ENCODE measurements at regions of chr17 and their contacts with region 1.

Region 1: DNA sequence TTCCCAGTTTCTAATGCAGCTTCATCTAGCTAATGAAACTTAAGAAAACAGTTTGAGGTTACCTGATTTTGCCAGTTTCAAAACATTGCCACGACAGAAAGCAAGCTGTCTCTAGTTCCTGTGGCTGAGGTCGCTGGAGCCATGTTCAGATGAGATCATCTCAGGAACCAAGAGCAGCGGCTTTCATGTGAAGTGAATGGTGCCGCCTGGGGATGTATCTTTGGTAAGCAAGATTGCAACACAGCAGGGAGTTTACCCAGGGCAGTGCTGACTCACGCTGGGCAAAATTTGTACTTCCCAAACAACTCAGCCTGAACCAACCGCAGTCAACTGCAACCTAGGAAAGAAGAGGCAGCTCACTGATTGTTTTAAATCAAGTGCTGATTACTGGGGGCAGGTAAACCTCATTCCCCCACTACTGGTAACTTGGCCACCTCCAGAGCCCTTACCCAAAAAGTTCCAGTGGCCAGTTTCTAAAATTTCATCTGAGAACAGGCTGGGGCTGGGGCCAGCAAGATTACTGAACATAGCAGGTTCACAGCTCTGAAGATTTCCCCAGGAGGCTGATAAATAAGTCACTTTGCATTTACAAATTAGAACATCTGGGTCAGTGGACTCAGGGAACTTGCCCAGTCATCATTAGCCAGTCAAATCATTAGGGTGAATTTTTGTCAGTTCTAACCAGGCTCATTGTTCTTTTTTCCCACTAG is at the start of gene RFFL:
- DNase-seq: peak; percentile 98
- ATAC-seq: peak; percentile 93
- H3K4me3 ChIP-seq: peak within 1 kb of the TSS; percentile 29; the same call in 1 of the 2 replicates
- H3K27ac ChIP-seq: peak within 1 kb of the TSS; percentile 86
- H3K4me1 ChIP-seq: peaks cover 23% of the 10 kb centered on the region
- H3K27me3 ChIP-seq: no peaks in the 10 kb centered on the region
- CTCF ChIP-seq: peak; percentile 16 to 48 (median 36); a peak in 3 of 6 replicates
- EP300 ChIP-seq: peak; percentile 80 to 86
- POLR2A ChIP-seq: peak; percentile 54
- RAD21 ChIP-seq: peak; percentile 45
- polyA plus RNA-seq, gene RFFL: 4.7 to 6.7 TPM

Region 2: DNA sequence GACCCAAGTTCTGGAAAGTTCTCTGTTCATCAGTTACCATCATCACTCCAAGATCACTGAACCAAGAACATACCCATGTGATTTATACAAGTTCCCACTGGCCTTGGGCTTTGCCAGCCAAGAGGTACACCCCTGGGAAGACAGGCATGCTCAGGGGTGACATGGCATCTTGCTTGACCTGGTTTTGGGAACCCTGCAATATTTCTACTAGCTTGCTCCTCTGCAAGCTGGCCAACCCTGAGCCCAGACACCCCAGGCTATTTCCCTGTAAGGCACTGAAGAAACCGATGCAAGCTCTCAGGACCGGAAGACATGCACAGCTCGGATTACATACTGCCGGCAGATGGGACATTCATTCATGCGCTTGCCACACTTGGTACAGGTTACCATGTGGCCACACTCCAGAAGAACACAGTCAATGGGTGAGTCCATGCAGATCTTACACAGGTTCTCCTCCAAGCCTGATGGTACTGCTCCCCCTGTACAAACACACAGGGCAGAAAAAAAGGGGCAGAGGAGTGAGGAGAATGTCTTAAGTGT is 51.9 kb before region 1 on chr17:
- CTCF ChIA-PET with region 1: interaction called, 4 read pairs
- POLR2A ChIA-PET with region 1: no interaction called
- RAD21 ChIA-PET with region 1: interaction called, 3 read pairs
- SMC1A ChIA-PET with region 1: interaction called, 10 read pairs
- in situ Hi-C with region 1: no loop called
- intact Hi-C with region 1: no loop called
- DNase-seq: no peak
- ATAC-seq: no peak
- H3K4me3 ChIP-seq: no peak overlapping the region
- H3K27ac ChIP-seq: no peak overlapping the region
- H3K4me1 ChIP-seq: no peaks in the 10 kb centered on the region
- H3K27me3 ChIP-seq: no peaks in the 10 kb centered on the region
- CTCF ChIP-seq: no peak
- EP300 ChIP-seq: no peak
- POLR2A ChIP-seq: peak; percentile 31; the same call in 1 of the 2 replicates
- RAD21 ChIP-seq: no peak

Region 3: DNA sequence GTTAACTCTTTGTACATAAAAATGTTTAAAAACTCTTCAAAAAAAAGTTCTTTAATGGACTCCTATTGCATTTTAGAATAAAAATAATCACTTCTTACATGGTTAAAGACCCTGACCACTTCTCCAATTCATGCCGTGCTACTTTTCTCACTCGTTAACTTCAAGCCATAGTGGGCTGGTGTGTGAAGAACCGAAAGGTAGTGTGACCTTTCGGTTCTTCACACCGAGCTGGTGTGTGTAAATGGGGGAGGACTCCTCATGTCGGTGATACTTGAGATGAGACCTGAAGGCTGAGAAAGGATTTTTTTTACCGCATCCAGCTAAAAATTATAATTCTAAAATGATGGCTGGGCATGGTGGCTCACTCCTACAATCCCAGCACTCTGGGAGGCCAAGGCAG is 22.3 kb before region 1 on chr17:
- CTCF ChIA-PET with region 1: interaction called, 11 read pairs
- POLR2A ChIA-PET with region 1: interaction called, 37 read pairs
- RAD21 ChIA-PET with region 1: interaction called, 53 read pairs
- SMC1A ChIA-PET with region 1: interaction called, 221 read pairs
- in situ Hi-C with region 1: no loop called
- intact Hi-C with region 1: loop called (anchors 2 kb)
- DNase-seq: no peak
- ATAC-seq: peak; percentile 50
- H3K4me3 ChIP-seq: no peak overlapping the region
- H3K27ac ChIP-seq: no peak overlapping the region
- H3K4me1 ChIP-seq: peaks cover 20% of the 10 kb centered on the region
- H3K27me3 ChIP-seq: no peaks in the 10 kb centered on the region
- CTCF ChIP-seq: no peak
- EP300 ChIP-seq: no peak; a peak in 1 of 4 replicates
- POLR2A ChIP-seq: no peak
- RAD21 ChIP-seq: no peak

Region 4: DNA sequence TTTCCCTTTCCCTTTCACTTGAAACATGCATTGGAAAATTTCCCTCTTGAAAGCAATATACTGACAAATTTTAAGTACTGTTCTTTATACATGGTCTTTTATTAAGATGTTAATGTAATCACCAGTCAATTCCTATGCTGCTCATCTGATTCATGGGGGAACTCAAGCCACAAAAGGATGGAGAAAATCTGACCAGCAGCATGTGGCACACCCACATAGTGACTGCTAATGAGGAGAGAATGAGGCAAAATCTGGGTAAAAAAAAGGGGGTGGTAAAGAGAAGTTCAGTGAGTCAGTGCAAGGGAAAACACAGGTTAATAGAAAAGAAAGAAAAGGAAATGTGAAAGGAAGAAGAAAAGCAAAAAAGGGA is 11.4 kb before region 1 on chr17:
- CTCF ChIA-PET with region 1: interaction called, 23 read pairs
- POLR2A ChIA-PET with region 1: interaction called, 37 read pairs
- RAD21 ChIA-PET with region 1: interaction called, 73 read pairs
- SMC1A ChIA-PET with region 1: interaction called, 221 read pairs
- in situ Hi-C with region 1: no loop called
- intact Hi-C with region 1: loop called (anchors 1 kb)
- DNase-seq: no peak
- ATAC-seq: peak; percentile 47
- H3K4me3 ChIP-seq: peak overlapping the region; percentile 4; the same call in 1 of the 2 replicates
- H3K27ac ChIP-seq: peak overlapping the region; percentile 93
- H3K4me1 ChIP-seq: peaks cover 27% of the 10 kb centered on the region
- H3K27me3 ChIP-seq: no peaks in the 10 kb centered on the region
- CTCF ChIP-seq: no peak
- EP300 ChIP-seq: no peak
- POLR2A ChIP-seq: no peak
- RAD21 ChIP-seq: no peak

Region 5: DNA sequence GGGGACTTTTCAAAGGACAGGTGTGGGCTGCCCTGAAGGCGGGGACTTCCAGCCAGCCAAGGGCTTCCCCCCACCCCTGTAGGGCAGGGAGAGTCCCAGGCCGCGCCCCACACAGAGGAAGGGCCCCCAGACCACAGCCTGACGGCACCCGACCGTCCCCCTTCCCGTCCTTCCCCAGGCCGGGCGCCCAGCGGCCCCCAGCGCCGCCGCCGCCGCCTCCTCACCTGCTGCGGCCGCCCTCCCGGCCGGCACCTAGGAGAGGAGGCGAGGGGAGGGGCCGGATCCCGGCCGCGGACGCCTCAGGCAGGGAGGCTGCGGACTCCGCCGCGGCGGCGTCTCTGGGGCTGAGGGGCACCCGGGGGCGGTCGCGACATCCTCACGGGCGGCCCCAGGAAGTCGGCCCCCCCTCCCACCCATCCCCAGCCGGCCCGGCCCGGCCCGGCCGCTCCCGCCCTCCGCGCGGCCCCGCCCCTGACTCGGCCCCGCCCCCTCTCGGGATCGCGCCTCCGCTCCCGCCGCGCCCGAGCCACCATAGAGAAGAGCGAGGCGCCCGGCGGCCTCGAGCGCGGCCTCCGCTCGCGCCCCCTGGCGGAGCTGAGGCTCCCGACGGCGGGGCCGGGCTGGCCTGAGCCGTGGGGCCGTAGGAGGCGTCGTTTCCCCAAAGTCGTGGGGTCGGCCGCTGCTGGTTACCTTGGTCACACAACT is 25.4 kb after region 1 on chr17:
- CTCF ChIA-PET with region 1: interaction called, 23 read pairs
- POLR2A ChIA-PET with region 1: interaction called, 115 read pairs
- RAD21 ChIA-PET with region 1: interaction called, 452 read pairs
- SMC1A ChIA-PET with region 1: interaction called, 534 read pairs
- in situ Hi-C with region 1: no loop called
- intact Hi-C with region 1: loop called (anchors 1 kb)
- DNase-seq: no peak
- ATAC-seq: peak; percentile 83
- H3K4me3 ChIP-seq: peak overlapping the region; percentile 80
- H3K27ac ChIP-seq: peak overlapping the region; percentile 96
- H3K4me1 ChIP-seq: peaks cover 9% of the 10 kb centered on the region
- H3K27me3 ChIP-seq: no peaks in the 10 kb centered on the region
- CTCF ChIP-seq: peak; percentile 70 to 84 (median 76); a peak in 5 of 6 replicates
- EP300 ChIP-seq: peak in 1 of 2 experiments; percentile 62; a peak in 1 of 4 replicates
- POLR2A ChIP-seq: peak; percentile 87
- RAD21 ChIP-seq: peak; percentile 73

Measured in GM12878 (cell line).